Aorta (tissue), 5 donors: ENCODE measurements at regions of chr12 and their contacts with region 1.

Region 1: GRCh38 chr12:122793685-122794106 is 19.3 kb downstream of the CCDC62 start:
- DNase-seq: no peak
- ATAC-seq: peak; percentile 69
- H3K4me3 ChIP-seq: no peak overlapping the region
- H3K27ac ChIP-seq: no peak overlapping the region
- H3K4me1 ChIP-seq: no peaks in the 10 kb centered on the region
- H3K27me3 ChIP-seq: no peaks in the 10 kb centered on the region

Region 2: GRCh38 chr12:122860346-122861090 is 66.8 kb after region 1 on chr12:
- intact Hi-C with region 1: loop called in 1 of 2 experiments (anchors 5 kb)
- DNase-seq: peak; percentile 91 to 96
- ATAC-seq: peak; percentile 86
- H3K4me3 ChIP-seq: no peak overlapping the region
- H3K27ac ChIP-seq: no peak overlapping the region
- H3K4me1 ChIP-seq: no peaks in the 10 kb centered on the region
- H3K27me3 ChIP-seq: no peaks in the 10 kb centered on the region

Region 3: DNA sequence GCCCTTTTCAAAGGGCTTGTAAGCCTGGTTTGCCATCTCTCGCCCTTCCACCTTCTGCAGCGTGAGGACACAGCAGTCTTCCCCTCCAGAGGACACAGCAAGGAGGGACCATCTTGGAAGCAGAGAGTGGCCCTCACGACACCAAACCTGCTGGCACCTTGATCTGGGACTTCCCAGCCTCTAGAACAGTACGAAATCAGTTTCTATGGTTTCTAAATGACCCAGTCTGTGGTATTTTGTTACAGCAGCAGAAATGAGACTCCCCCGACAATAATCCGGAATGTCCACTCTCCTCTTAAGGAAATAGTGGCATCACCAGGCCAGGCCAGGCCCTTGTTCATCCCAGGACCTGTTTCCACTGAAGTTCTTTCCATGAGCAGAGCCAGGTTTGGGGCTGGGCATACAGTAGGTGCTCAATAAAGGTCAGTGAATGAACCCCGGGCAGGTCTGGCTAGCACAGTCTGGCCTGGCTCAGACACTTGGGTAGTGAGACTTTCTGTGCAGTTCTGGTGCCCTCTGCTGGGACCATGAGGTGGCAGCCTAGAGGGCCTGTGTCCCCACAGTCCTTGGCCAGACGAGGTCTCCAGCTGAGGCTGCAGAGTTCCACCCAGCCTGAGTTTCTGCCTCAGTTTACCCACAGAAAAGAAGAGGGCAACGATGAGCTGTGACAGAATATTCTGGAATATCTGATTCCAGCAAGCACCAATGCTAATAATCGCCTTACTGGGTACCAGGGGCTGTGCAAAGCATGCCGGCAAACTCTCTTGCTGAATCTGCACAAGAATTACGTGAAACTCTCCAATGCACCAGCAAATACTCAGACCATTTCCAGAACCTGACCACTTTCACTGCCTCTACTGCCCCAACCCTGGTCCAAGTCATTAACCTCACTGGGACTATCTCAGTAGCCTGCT is 158.5 kb after region 1 on chr12:
- intact Hi-C with region 1: loop called (anchors 2 to 5 kb)
- DNase-seq: peak; percentile 86 to 88
- ATAC-seq: peak; percentile 91
- H3K4me3 ChIP-seq: no peak overlapping the region
- H3K27ac ChIP-seq: no peak overlapping the region
- H3K4me1 ChIP-seq: no peaks in the 10 kb centered on the region
- H3K27me3 ChIP-seq: no peaks in the 10 kb centered on the region